A673 (cell line): ENCODE measurements at regions of chrX and their contacts with region 1.

Region 1: GRCh38 chrX:153971450-153972367 is at the start of gene HCFC1:
- DNase-seq: peak; percentile 97
- H3K4me3 ChIP-seq: peak within 1 kb of the TSS; percentile 86
- H3K27ac ChIP-seq: peak within 1 kb of the TSS; percentile 99
- H3K4me1 ChIP-seq: peaks cover 22% of the 10 kb centered on the region
- H3K27me3 ChIP-seq: no peaks in the 10 kb centered on the region
- CTCF ChIP-seq: no peak
- total RNA-seq, gene HCFC1: 124 and 137 TPM in 2 replicates

Region 2: GRCh38 chrX:153927922-153928760 is 43.6 kb before region 1 on chrX:
- CTCF ChIA-PET with region 1: no interaction called
- POLR2A ChIA-PET with region 1: no interaction called
- intact Hi-C with region 1: loop called (anchors 1 kb)
- DNase-seq: peak; percentile 99
- H3K4me3 ChIP-seq: peak overlapping the region; percentile 58
- H3K27ac ChIP-seq: peak overlapping the region; percentile 94
- H3K4me1 ChIP-seq: peaks cover 20% of the 10 kb centered on the region
- H3K27me3 ChIP-seq: no peaks in the 10 kb centered on the region
- CTCF ChIP-seq: no peak

Region 3: GRCh38 chrX:154097597-154098541 is 126.2 kb after region 1 on chrX and contains the start of gene MECP2:
- CTCF ChIA-PET with region 1: no interaction called
- POLR2A ChIA-PET with region 1: no interaction called
- intact Hi-C with region 1: no loop called
- DNase-seq: peak; percentile 94
- H3K4me3 ChIP-seq: peak within 1 kb of the TSS; percentile 58
- H3K27ac ChIP-seq: peak within 1 kb of the TSS; percentile 79
- H3K4me1 ChIP-seq: peaks cover 5% of the 10 kb centered on the region
- H3K27me3 ChIP-seq: peaks cover 7% of the 10 kb centered on the region
- CTCF ChIP-seq: no peak
- total RNA-seq, gene MECP2: 51.9 and 52.8 TPM in 2 replicates

Region 4: DNA sequence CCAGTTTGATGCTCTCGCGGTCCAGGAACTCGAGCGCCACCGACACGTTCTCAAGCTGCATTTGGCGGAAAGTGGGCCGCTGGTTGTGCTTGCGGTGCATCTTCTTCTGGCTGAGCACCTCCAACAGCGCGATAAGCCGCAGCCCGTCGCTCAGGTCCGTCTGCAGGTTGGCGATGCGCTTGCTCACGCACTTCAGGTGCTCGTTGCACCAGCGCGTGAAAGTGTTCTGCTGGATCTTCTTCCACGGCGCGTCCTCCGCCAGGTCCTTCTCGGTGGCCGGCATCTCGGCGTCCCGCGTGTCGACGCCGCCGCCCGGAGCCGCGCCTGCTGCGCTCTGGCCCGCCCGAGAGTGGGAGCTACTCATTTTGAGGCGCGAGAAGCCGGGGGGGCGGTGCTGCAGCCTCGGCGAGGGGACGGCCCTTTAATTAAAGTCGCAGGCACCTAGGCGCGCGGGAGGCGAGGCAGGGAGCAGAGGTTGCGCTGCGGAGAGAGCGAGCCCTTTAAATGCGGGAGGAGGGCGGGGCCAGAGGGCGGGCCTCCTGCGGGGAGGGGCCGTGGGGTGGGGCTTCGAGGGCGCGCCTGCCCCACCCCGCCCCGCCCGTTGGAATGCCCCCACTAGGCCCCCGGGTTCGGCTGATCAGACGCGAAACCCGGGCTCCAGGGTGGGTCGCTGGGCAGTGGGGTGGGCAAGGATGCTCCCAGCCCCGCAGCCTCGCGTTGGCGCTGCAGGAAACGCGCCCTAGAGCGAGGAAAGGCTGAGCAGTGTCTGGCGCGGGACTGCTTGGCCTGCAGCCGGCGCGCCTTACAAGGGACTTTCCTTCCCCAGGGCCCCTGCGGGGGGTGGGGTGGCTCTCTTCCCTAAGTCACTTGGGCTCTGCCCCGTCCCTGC is 399.4 kb after region 1 on chrX:
- CTCF ChIA-PET with region 1: no interaction called
- POLR2A ChIA-PET with region 1: interaction called, 11 read pairs
- intact Hi-C with region 1: no loop called
- DNase-seq: peak; percentile 97
- H3K4me3 ChIP-seq: peak overlapping the region; percentile 81
- H3K27ac ChIP-seq: peak overlapping the region; percentile 96
- H3K4me1 ChIP-seq: peaks cover 21% of the 10 kb centered on the region
- H3K27me3 ChIP-seq: no peaks in the 10 kb centered on the region
- CTCF ChIP-seq: no peak

Region 5: GRCh38 chrX:154397819-154398724 is 426.4 kb after region 1 on chrX and contains the start of gene RPL10:
- CTCF ChIA-PET with region 1: no interaction called
- POLR2A ChIA-PET with region 1: no interaction called
- intact Hi-C with region 1: loop called (anchors 10 kb)
- DNase-seq: peak; percentile 96
- H3K4me3 ChIP-seq: peak within 1 kb of the TSS; percentile 89
- H3K27ac ChIP-seq: peak within 1 kb of the TSS; percentile 100
- H3K4me1 ChIP-seq: no peaks in the 10 kb centered on the region
- H3K27me3 ChIP-seq: no peaks in the 10 kb centered on the region
- CTCF ChIP-seq: no peak
- total RNA-seq, gene RPL10: 2,429 and 2,445 TPM in 2 replicates